ENCODE measurements at regions of chr11 and their contacts with region 1.

Region 1: GRCh38 chr11:69642913-69643632 is 2.1 kb downstream of the CCND1 start:
- DNase-seq: peak in 1 of 2 experiments; percentile 90
- H3K4me3 ChIP-seq: peak overlapping the region; percentile 90 to 97 (median 95)
- H3K27ac ChIP-seq: no peak overlapping the region
- H3K4me1 ChIP-seq: peaks cover 0 to 9% (median 5%) of the 10 kb centered on the region in 4 experiments; a peak in 5 of 7 replicates
- H3K27me3 ChIP-seq: peaks cover 0 to 6% (median 2%) of the 10 kb centered on the region in 4 experiments; a peak in 1 of 7 replicates
- CTCF ChIP-seq: peak in 2 of 3 experiments; percentile 91 to 94; a peak in 3 of 4 replicates
- EP300 ChIP-seq: no peak
- POLR2A ChIP-seq: peak in 1 of 2 experiments; percentile 69; a peak in 2 of 3 replicates
- RAD21 ChIP-seq: peak; percentile 93 to 98

Region 2: GRCh38 chr11:69131644-69132300 is 511.3 kb before region 1 on chr11:
- CTCF ChIA-PET with region 1: interaction called, 13 read pairs
- POLR2A ChIA-PET with region 1: interaction called, 3 read pairs
- DNase-seq: peak; percentile 81 to 89
- H3K4me3 ChIP-seq: no peak overlapping the region
- H3K27ac ChIP-seq: no peak overlapping the region
- H3K4me1 ChIP-seq: peaks cover 0 to 6% (median 2%) of the 10 kb centered on the region in 4 experiments; a peak in 4 of 7 replicates
- H3K27me3 ChIP-seq: no peaks in the 10 kb centered on the region; a peak in 1 of 7 replicates
- CTCF ChIP-seq: peak; percentile 91 to 98 (median 97)
- EP300 ChIP-seq: peak in 1 of 2 experiments; percentile 40; a peak in 1 of 3 replicates
- POLR2A ChIP-seq: no peak
- RAD21 ChIP-seq: peak; percentile 91

Region 3: GRCh38 chr11:69436973-69437875 is 205.8 kb before region 1 on chr11:
- CTCF ChIA-PET with region 1: interaction called, 5 read pairs
- POLR2A ChIA-PET with region 1: interaction called, 20 read pairs
- DNase-seq: no peak
- H3K4me3 ChIP-seq: no peak overlapping the region
- H3K27ac ChIP-seq: no peak overlapping the region
- H3K4me1 ChIP-seq: peaks cover 2 to 57% (median 37%) of the 10 kb centered on the region in 4 experiments
- H3K27me3 ChIP-seq: peaks cover 0 to 3% (median 1%) of the 10 kb centered on the region in 4 experiments; a peak in 3 of 7 replicates
- CTCF ChIP-seq: peak in 2 of 3 experiments; percentile 28 to 31; a peak in 2 of 4 replicates
- EP300 ChIP-seq: no peak
- POLR2A ChIP-seq: no peak
- RAD21 ChIP-seq: peak; percentile 17 to 30; a peak in 3 of 4 replicates

Region 4: GRCh38 chr11:69617682-69618081 is 25.4 kb before region 1 on chr11:
- CTCF ChIA-PET with region 1: interaction called, 3 read pairs
- POLR2A ChIA-PET with region 1: interaction called, 11 read pairs
- DNase-seq: no peak
- H3K4me3 ChIP-seq: no peak overlapping the region
- H3K27ac ChIP-seq: no peak overlapping the region
- H3K4me1 ChIP-seq: peaks cover 0 to 10% (median 2%) of the 10 kb centered on the region in 4 experiments; a peak in 3 of 7 replicates
- H3K27me3 ChIP-seq: no peaks in the 10 kb centered on the region
- CTCF ChIP-seq: no peak
- EP300 ChIP-seq: no peak
- POLR2A ChIP-seq: no peak
- RAD21 ChIP-seq: no peak

Region 5: DNA sequence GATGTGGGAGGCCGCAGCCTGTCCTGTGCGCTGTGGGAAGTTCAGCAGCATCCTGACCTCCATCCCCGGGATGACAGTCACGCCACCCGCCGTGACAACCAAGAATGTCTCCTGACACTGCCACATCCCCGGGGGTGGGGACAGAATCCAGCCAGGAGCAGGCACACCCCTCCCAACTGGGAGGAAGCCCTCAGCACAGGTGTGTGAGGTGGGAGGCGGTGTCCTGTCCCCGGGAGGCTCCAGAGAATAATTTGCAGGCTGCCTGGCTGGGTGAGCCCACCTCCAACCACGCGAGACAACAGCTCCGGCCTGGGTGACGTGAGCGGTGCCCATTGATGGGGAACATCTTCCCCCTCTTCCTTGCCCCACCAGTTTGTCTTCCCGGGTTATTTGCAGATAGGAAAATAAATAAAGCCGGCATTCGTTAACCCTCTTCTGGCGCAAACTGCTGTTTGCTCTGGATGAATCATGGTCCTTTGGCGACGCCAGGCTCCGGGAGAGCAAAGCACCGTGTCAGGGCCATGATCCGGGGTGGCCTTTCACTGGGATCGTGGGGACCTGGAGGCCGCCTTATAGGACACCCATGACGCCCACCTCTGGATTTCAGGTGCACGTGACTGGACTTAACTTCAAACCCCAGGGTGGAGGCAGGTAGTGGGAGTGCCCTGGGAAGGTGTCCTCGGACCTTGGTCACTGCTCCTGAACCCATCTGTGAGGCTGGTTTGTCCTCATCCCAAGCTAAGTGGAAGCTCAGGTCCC is 11.7 kb after region 1 on chr11:
- CTCF ChIA-PET with region 1: interaction called, 36 read pairs
- POLR2A ChIA-PET with region 1: interaction called, 197 read pairs
- DNase-seq: no peak
- H3K4me3 ChIP-seq: no peak overlapping the region
- H3K27ac ChIP-seq: no peak overlapping the region
- H3K4me1 ChIP-seq: peaks cover 5 to 18% (median 13%) of the 10 kb centered on the region in 4 experiments
- H3K27me3 ChIP-seq: no peaks in the 10 kb centered on the region; a peak in 1 of 7 replicates
- CTCF ChIP-seq: no peak
- EP300 ChIP-seq: no peak
- POLR2A ChIP-seq: peak in 1 of 2 experiments; percentile 24; a peak in 1 of 3 replicates
- RAD21 ChIP-seq: no peak

Region 6: DNA sequence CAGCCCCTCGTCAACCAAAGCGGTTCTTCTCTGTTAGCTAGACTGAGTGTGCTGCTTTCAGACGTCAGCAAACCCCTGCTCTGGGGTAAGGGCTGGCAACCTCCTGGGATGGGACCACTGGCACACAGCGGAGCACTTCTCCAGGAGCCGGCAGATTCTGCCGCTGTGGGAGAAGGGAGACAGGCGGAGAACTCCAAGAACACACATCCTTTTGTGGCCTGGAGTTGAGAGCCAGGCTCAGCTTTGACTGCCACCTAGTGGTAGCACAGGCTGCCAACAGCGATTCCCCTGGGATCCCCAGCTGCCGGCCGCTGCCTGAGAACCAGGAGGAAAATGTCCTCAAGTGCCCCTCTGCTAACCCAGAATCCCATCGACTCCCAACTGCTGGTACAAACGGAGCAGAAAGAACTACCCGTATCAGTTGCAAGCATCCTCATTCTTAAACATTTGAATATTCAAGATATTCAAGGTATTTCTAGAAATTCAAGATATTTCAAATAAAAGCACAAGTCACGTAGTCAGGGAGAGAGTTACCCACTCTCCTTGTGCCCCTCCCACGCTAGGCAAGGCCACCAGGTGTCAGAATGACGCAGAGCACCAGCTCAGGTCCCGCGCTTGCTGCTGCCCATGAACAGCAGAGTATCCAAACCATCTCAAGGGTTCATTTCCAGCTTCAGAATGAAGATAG is 27.2 kb after region 1 on chr11:
- CTCF ChIA-PET with region 1: interaction called, 13 read pairs
- POLR2A ChIA-PET with region 1: interaction called, 18 read pairs
- DNase-seq: peak in 1 of 2 experiments; percentile 90
- H3K4me3 ChIP-seq: no peak overlapping the region
- H3K27ac ChIP-seq: no peak overlapping the region
- H3K4me1 ChIP-seq: peaks cover 3 to 5% (median 4%) of the 10 kb centered on the region in 4 experiments
- H3K27me3 ChIP-seq: no peaks in the 10 kb centered on the region
- CTCF ChIP-seq: peak; percentile 87 to 99 (median 98)
- EP300 ChIP-seq: no peak
- POLR2A ChIP-seq: no peak
- RAD21 ChIP-seq: peak; percentile 88 to 89

Region 7: GRCh38 chr11:69691449-69691848 is 48.4 kb after region 1 on chr11:
- CTCF ChIA-PET with region 1: no interaction called
- POLR2A ChIA-PET with region 1: no interaction called
- DNase-seq: no peak
- H3K4me3 ChIP-seq: no peak overlapping the region
- H3K27ac ChIP-seq: no peak overlapping the region
- H3K4me1 ChIP-seq: no peaks in the 10 kb centered on the region; a peak in 1 of 7 replicates
- H3K27me3 ChIP-seq: no peaks in the 10 kb centered on the region; a peak in 2 of 7 replicates
- CTCF ChIP-seq: no peak
- EP300 ChIP-seq: no peak
- POLR2A ChIP-seq: no peak
- RAD21 ChIP-seq: no peak

Region 8: DNA sequence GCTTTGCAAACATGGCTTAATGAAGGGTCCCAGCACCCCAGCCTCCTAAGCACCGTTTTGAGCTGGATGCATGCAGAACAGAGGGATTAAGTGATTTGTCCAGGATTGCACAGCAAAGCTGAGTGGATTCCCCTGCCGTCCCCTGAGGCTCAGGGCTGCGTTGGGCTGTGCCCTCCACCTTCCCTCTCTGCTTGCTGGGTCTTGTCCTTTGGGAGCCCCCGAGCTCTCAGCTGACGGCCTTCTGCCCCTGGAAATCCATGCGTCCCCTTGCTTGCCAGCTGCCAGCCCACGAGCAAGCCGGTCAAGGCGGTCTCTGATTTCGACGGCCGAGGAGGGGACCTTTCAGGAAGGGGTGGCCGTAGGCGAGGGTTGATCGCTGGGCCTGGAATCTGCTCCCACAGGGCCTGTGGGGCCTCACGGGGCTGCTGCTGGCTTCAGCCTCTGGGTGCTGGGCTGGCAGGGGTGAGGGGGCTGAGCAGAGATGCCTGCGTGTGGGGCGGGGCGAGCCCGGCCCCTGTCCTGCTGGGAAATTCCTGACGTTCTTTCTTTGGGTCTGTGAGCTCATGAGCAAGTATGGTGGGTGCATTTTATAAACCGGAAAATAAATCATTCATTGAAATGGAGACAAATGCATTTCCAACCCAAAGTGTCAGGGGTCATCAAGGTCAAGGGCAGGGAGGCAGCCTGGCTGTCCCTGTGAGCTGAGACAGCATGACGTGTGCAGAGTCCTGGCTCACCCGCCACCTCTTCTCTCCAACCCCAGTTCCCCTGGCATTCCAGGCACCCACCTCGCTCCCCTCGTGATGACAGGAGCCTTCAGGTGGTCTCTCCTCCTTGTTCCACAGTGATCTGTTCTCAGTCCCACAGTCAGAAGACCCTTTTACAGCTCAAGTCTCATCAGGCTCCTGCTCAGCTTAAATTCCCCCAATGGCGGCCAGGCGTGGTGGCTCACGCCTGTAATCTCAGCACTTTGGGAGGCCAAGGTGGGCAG is 104.0 kb after region 1 on chr11:
- CTCF ChIA-PET with region 1: no interaction called
- POLR2A ChIA-PET with region 1: no interaction called
- DNase-seq: no peak
- H3K4me3 ChIP-seq: no peak overlapping the region
- H3K27ac ChIP-seq: no peak overlapping the region
- H3K4me1 ChIP-seq: peaks cover 0 to 7% (median 6%) of the 10 kb centered on the region in 4 experiments; a peak in 5 of 7 replicates
- H3K27me3 ChIP-seq: no peaks in the 10 kb centered on the region
- CTCF ChIP-seq: no peak
- EP300 ChIP-seq: no peak
- POLR2A ChIP-seq: no peak
- RAD21 ChIP-seq: no peak

Region 9: GRCh38 chr11:69760319-69760718 is 117.2 kb after region 1 on chr11:
- CTCF ChIA-PET with region 1: no interaction called
- POLR2A ChIA-PET with region 1: no interaction called
- DNase-seq: no peak
- H3K4me3 ChIP-seq: no peak overlapping the region
- H3K27ac ChIP-seq: no peak overlapping the region
- H3K4me1 ChIP-seq: peaks cover 0 to 6% (median 0%) of the 10 kb centered on the region in 4 experiments; a peak in 1 of 7 replicates
- H3K27me3 ChIP-seq: no peaks in the 10 kb centered on the region; a peak in 1 of 7 replicates
- CTCF ChIP-seq: no peak
- EP300 ChIP-seq: no peak
- POLR2A ChIP-seq: no peak
- RAD21 ChIP-seq: no peak